ENCODE measurements at regions of chr13 and their contacts with region 1.

Region 1: DNA sequence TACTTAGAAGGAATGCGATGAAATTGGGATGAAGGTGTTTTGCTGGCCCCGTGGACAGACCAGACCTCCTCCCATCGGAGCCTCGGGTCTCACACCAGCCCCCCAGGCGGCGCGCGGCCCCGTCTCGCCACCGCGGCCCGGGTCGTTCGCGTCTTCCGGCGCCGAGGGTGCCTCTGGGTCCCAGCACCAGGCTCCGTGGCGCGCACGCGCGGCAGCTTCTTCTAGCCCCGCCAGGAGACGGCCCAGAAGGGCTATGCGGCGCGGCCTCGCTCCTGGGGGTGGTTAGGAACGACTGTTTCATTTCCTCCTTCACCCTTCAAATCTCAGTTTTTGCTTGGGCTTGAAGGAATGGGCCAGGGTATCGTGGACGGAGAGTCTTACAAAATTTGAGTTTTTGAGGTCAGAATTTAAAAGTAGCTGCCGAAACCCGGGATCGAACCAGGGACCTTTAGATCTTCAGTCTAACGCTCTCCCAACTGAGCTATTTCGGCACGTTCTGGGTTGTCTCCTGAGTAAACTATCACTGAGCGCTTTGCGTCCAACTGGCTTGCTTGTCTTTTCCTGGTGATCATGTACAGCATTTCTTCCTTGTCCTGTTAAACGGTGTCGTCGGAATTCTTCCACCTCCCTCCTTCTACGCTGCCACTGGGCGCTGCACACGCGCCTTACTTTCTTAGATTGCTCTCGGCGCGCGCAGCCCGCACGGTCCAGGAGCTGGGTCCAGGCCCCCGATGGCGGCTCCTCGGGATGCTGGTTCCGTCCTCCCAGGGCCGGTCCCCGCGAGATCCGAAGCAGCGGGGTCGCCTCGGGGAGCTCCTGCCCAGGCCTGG is 46.5 kb downstream of the TGDS start:
- DNase-seq: peak; percentile 94
- ATAC-seq: peak; percentile 94
- H3K4me3 Mint-ChIP-seq: peak overlapping the region; percentile 94
- H3K27ac Mint-ChIP-seq: peak overlapping the region; percentile 96
- H3K4me1 Mint-ChIP-seq: peaks cover 17% of the 10 kb centered on the region
- H3K27me3 Mint-ChIP-seq: peaks cover 9% of the 10 kb centered on the region

Region 2: DNA sequence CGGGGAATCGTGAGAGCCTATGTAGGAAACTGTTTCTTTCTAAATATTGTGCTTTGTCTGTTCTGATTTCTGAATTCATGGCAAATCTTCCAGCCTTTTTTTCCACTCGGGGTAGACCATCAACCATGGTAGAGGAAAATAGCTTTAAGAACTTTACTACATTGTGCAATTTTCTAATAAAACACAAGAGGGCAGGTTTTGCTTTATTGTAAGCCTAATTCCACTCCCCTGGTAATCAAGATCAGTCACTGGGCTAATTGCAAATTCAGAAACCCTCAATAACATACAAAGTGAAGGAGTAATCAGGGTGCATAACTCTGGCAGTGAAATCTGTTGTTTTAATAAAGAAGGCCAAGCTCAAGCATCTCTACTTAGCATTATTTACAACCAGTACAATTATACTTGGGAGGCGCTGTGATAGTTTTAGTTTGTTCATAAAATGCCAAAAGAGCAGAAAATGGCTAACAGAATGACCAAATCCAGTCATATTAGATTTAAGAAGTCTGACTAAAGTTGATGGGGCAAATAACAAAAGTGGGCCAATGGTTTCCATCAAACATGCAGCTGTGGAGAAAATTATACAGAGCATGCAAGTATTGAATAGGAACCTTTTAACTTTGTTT is 113.7 kb before region 1 on chr13:
- CTCF ChIA-PET with region 1: interaction called, 11 read pairs
- DNase-seq: no peak
- ATAC-seq: peak; percentile 58
- H3K4me3 Mint-ChIP-seq: no peak overlapping the region
- H3K27ac Mint-ChIP-seq: no peak overlapping the region
- H3K4me1 Mint-ChIP-seq: peaks cover 16% of the 10 kb centered on the region
- H3K27me3 Mint-ChIP-seq: peaks cover 3% of the 10 kb centered on the region

Region 3: DNA sequence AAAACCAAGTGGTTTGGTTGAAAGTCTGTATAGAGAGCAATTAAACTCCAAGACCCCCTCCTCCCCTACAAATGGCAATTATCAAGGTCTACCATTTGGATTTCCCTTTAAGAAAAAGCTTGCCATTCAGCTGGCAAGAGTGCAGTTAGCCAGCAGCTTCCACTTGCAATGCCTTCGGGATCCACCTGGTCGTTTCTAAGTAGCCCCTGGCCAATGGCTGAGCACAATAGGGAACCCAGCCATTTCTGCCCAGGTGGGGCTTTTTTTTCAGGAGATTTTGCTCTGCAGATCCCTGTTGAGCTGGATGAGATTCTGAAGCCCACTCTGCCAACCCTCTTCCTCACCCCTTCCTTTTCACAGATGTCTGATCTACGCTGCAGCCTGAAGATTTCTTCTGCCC is 20.2 kb after region 1 on chr13:
- CTCF ChIA-PET with region 1: no interaction called
- DNase-seq: no peak
- ATAC-seq: no peak
- H3K4me3 Mint-ChIP-seq: no peak overlapping the region
- H3K27ac Mint-ChIP-seq: no peak overlapping the region
- H3K4me1 Mint-ChIP-seq: no peaks in the 10 kb centered on the region
- H3K27me3 Mint-ChIP-seq: no peaks in the 10 kb centered on the region

Region 4: GRCh38 chr13:94595950-94596574 is 46.6 kb after region 1 on chr13 and contains the start of gene TGDS:
- CTCF ChIA-PET with region 1: interaction called, 14 read pairs
- DNase-seq: peak; percentile 95
- ATAC-seq: peak; percentile 98
- H3K4me3 Mint-ChIP-seq: peak within 1 kb of the TSS; percentile 92
- H3K27ac Mint-ChIP-seq: peak within 1 kb of the TSS; percentile 89
- H3K4me1 Mint-ChIP-seq: peaks cover 45% of the 10 kb centered on the region
- H3K27me3 Mint-ChIP-seq: no peaks in the 10 kb centered on the region
- total RNA-seq, gene TGDS: 14.0 to 19.5 TPM

Region 5: GRCh38 chr13:94601446-94602431 is 52.3 kb after region 1 on chr13 and contains the start of gene GPR180:
- CTCF ChIA-PET with region 1: interaction called, 14 read pairs
- DNase-seq: peak; percentile 95
- ATAC-seq: peak; percentile 100
- H3K4me3 Mint-ChIP-seq: peak within 1 kb of the TSS; percentile 84
- H3K27ac Mint-ChIP-seq: peak within 1 kb of the TSS; percentile 76
- H3K4me1 Mint-ChIP-seq: peaks cover 34% of the 10 kb centered on the region
- H3K27me3 Mint-ChIP-seq: no peaks in the 10 kb centered on the region
- total RNA-seq, gene GPR180: 7.2 to 7.5 TPM